ENCODE measurements at regions of chr11 and their contacts with region 1.

Region 1: GRCh38 chr11:44556735-44557409 is 8.6 kb upstream of the CD82 start:
- DNase-seq: peak; percentile 61 to 89 (median 82)
- ATAC-seq: peak; percentile 63 to 83
- H3K4me3 ChIP-seq: no peak overlapping the region
- H3K27ac ChIP-seq: no peak overlapping the region
- H3K4me1 ChIP-seq: peaks cover 3% of the 10 kb centered on the region
- H3K27me3 ChIP-seq: no peaks in the 10 kb centered on the region

Region 2: DNA sequence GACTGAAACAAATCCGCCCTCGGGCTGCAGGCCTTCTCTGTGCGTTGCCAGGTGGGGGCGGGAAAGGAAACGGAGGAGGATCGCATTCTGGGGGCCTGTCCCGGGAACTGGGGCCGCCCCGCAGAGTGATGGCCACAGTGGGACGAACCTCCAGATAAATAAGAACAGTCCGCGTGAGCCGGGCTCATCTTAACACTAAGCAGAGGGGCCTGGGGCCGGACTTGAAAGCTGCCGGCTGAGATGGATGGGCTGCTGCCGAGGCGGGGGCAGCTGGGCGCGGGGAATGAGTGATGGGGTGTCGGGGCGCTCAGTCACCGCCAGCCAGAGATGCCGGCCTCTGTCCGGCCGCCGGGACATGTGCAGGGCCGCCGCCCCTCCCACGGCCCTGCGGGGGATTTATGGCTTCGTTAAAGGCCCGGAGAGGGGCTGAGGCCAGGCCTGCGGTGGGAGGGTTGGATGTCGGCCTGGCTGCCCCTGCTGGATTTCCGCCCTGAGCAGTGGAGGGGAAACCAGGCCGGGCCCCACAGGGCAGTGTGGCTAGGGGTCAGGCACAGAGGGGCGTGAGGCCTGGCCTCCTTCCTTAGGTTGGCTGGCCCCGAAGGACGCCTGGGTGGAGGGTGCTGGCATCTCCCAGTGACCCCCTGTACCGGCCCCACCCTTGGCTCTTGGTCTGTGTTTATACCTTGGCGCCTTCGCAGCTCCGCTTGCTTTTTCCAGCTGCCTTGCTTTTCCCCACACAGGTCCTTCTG is 36.7 kb before region 1 on chr11:
- intact Hi-C with region 1: no loop called
- DNase-seq: peak; percentile 53 to 79 (median 79)
- ATAC-seq: peak; percentile 78 to 89
- H3K4me3 ChIP-seq: no peak overlapping the region
- H3K27ac ChIP-seq: no peak overlapping the region
- H3K4me1 ChIP-seq: peaks cover 2% of the 10 kb centered on the region
- H3K27me3 ChIP-seq: no peaks in the 10 kb centered on the region

Region 3: DNA sequence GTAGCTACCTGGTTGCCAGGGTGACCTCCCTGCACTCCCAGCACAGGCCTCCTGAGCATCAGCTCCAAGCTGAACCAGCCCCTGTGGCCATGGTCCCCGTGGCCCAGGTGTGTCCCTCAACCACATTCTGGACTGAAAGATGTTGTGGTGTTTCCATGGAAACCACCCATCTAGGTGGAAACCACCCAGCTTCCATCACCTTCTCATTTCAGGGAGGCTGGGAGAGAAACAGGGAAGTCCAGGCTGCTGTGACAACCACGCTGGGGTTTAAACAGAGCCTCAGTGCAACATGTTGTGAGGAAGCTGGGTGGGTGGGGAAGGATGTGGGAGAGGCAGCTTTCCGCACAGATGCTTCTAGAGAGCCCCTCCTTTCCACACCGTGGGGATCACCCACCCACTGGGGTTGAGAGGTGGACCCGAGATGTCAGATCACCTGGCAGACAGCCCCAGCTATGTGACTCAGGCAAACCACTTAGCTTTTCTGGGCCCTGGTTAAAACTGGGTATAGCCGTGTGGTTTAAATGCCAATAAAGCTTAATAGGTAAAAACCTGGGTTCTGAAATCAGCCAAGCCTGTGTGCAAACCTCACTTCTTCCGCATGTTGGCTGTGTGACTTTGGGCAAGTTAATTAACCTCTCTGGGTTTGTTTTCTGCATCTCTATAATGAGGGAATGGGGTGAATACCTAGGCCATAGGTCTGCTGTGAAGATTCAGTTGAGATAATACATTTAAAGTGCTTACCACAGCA is 55.0 kb after region 1 on chr11:
- intact Hi-C with region 1: loop called (anchors 1 to 2 kb)
- DNase-seq: peak in 2 of 3 donors; percentile 38 to 39
- ATAC-seq: peak in 1 of 2 donors; percentile 45
- H3K4me3 ChIP-seq: no peak overlapping the region
- H3K27ac ChIP-seq: no peak overlapping the region
- H3K4me1 ChIP-seq: no peaks in the 10 kb centered on the region
- H3K27me3 ChIP-seq: no peaks in the 10 kb centered on the region

Region 4: DNA sequence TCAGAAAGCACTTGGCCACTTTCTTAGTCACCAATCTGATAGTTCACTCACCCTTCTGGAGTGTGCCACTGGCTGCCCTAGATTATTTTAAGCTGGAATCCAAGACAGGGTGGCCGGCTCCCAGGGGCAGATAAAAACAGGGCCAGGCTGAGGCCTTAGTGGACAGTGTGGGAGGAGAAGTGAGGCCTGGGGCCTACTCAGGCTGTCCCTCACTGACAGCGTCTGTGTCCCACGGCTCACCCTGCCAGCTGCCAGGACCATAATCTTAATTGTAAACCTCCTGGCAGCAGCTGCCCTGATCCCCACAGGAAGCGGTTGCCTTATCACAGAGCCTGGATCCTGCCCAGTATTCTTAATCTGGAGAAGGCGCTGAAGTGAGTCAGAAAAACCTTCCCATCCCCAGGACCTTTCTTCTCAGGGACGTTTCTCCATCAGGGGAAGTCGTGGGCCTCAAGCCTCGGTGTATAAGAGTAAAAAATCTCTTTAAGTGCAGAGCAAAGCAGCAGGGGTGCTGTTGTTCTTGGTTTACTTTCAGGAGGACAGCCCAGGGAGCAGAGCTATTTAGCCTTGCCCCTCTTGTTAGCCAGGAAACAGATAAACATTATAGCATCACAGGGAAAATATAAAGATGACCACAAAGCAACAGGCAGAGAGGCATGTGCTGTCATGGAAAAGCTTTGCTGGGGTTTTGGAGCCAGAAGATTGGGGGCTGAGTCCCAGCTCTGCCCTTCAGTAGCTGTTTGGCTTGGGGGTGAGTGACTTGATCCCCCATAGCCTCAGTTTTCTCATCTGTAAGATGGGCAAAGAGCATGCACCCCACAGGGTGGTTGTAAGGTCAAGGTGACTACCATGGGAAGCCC is 209.5 kb after region 1 on chr11:
- intact Hi-C with region 1: no loop called
- DNase-seq: peak; percentile 87 to 92 (median 92)
- ATAC-seq: peak; percentile 90 to 91
- H3K4me3 ChIP-seq: no peak overlapping the region
- H3K27ac ChIP-seq: peak overlapping the region; percentile 99
- H3K4me1 ChIP-seq: peaks cover 30% of the 10 kb centered on the region
- H3K27me3 ChIP-seq: no peaks in the 10 kb centered on the region

Region 5: DNA sequence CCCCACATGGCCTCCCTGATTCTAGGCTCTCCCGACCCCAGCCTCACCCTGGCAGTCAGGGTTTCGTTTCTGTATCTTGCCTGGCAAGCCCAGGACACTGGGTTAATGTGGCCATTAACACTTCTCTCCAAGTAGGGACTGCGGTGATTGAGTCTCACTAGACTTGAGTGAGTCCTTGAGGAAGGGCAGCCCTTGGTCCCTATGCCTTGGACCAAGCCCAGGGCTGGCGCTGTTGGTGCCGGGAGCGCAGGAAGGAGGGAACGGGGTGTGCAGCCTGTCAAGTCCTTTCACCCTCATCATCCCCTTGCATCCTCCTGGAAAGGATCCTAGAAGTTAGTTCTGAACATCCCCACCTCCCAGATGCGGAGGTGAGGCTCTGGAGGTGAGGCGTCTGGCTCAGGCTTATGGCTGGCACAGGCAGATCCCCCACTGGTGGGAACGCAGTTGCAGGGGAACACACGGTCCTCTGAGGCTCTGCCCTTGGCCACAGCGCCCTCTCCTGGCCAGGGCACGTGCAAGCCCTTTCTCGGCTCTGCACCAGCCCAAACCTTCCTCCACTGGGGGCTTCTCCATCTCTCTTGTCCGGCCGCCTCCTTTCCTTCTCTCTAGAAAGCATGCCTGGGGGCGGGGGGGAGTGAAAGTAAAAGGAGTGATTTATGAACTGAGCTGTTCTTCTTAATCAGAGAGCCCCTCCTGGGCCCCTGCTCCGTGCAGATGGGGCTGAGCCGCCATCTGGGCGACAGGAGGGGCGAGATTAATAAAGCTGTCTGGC is 337.2 kb after region 1 on chr11:
- intact Hi-C with region 1: loop called in 1 of 4 experiments (anchors 10 kb)
- DNase-seq: peak; percentile 80 to 90 (median 90)
- ATAC-seq: peak; percentile 85 to 92
- H3K4me3 ChIP-seq: no peak overlapping the region
- H3K27ac ChIP-seq: peak overlapping the region; percentile 73
- H3K4me1 ChIP-seq: peaks cover 10% of the 10 kb centered on the region
- H3K27me3 ChIP-seq: no peaks in the 10 kb centered on the region

Region 6: GRCh38 chr11:44911029-44911814 is 354.4 kb after region 1 on chr11:
- intact Hi-C with region 1: loop called (anchors 10 kb)
- DNase-seq: peak; percentile 85 to 91 (median 87)
- ATAC-seq: peak; percentile 78 to 83
- H3K4me3 ChIP-seq: no peak overlapping the region
- H3K27ac ChIP-seq: peak overlapping the region; percentile 33
- H3K4me1 ChIP-seq: peaks cover 2% of the 10 kb centered on the region
- H3K27me3 ChIP-seq: no peaks in the 10 kb centered on the region